ENCODE measurements at regions of chr10 and their contacts with region 1.

Region 1: DNA sequence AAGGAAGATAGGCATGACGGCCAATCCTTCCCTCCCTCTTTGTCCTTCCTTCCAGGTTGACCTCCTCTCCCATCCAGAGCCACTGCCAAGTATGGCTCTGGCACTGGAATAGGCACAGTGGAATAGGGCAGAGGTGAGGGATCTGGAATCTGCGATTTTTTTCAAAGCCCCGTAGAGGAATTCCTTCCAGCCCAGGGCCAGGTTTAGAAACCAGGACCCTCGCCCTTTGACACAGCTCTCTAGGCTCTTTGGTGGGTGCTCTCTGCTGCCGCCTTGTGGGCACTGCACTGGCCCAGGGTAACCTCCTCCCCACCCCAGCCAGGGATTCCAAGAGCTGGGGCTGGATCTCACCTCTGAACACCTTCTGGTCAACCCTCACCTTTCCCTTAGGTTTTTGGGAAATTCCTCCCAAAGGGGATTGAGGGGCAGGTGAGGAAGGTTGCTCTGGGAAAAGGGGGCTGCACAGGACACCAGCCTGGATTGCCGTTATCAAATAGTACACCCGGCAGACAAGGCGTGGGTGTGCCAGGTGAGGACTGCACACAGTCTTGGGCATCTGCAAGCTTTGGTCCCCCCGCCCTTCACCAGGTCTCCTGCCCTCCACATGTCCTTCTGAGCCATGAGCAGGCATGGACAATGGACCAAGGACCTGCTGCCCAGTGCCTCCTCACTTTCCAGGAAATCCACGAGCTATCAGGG is 22.8 kb downstream of the C10orf105 start:
- DNase-seq: peak; percentile 88
- H3K4me3 ChIP-seq: no peak overlapping the region; a peak in 1 of 4 replicates
- H3K27ac ChIP-seq: no peak overlapping the region
- H3K4me1 ChIP-seq: peaks cover 0 to 7% of the 10 kb centered on the region in 2 experiments; a peak in 1 of 4 replicates
- H3K27me3 ChIP-seq: peaks cover 28% of the 10 kb centered on the region; the same call in 1 of the 2 replicates
- CTCF ChIP-seq: peak; percentile 82
- EP300 ChIP-seq: no peak
- RAD21 ChIP-seq: peak; percentile 64

Region 2: DNA sequence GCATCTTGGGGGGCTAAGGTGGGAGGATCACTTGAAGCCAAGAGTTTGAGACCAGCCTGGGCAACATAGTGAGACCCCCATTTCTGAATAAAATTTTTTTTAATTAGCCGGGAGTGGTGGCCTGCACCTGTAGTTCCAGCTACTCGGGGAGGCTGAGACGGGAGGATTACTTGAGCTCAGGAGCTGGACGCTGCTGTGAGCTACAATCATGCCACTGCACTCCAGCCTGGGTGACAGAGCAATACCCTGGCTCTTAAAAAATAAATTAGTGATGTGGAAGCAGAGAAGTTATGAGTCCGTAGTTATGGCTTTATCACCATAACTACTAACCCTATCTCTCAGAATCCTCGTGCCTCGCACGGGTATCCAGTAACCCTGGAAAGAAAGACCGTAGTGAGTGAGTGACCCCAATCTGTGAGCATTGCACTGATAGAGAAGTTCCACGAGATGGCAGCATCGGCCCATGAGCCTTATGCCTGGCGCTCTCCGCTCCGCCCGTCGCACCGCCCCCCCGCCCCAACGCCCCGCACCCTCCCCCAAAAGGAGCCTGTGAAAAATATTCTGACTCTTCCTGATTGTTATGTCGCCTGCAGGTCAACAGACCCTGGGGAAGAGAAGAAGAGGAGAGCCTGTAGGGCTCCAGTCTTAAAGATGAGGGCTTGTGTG is 382.6 kb before region 1 on chr10:
- CTCF ChIA-PET with region 1: interaction called, 33 read pairs
- POLR2A ChIA-PET with region 1: interaction called, 3 read pairs
- DNase-seq: peak; percentile 81
- H3K4me3 ChIP-seq: no peak overlapping the region
- H3K27ac ChIP-seq: no peak overlapping the region
- H3K4me1 ChIP-seq: peaks cover 0 to 11% of the 10 kb centered on the region in 2 experiments; a peak in 1 of 4 replicates
- H3K27me3 ChIP-seq: no peaks in the 10 kb centered on the region
- CTCF ChIP-seq: peak; percentile 69
- EP300 ChIP-seq: no peak
- RAD21 ChIP-seq: peak; percentile 80

Region 3: GRCh38 chr10:71383972-71384687 is 312.6 kb before region 1 on chr10:
- CTCF ChIA-PET with region 1: interaction called, 17 read pairs
- POLR2A ChIA-PET with region 1: no interaction called
- DNase-seq: peak; percentile 84
- H3K4me3 ChIP-seq: no peak overlapping the region; a peak in 1 of 4 replicates
- H3K27ac ChIP-seq: no peak overlapping the region
- H3K4me1 ChIP-seq: no peaks in the 10 kb centered on the region
- H3K27me3 ChIP-seq: peaks cover 30% of the 10 kb centered on the region; the same call in 1 of the 2 replicates
- CTCF ChIP-seq: peak; percentile 89
- EP300 ChIP-seq: no peak
- RAD21 ChIP-seq: peak; percentile 80

Region 4: DNA sequence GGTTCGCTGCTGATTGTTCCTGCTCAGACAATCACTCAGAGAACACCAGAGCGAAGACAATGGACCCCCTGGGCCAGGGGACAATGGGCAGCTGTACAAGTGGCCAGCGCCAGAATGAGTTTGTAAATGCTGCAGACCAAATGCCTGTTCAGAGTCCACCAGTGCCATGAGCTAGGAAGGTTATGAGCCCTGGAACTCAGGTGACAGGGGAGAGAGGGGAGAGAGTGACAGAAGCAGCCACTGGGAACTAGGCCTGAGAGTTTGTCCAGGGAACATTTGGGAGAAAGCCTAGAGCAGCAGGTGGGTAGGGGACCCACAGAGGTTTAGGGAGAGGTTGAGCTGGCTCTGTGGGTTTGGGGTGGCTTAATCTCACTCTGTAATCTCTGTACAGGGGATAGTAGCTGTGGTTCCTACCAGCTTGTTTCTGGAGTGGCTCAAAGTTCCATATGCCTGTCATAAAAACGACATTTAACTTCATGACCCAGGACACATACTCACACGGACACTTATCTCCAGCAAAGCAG is 37.6 kb before region 1 on chr10:
- CTCF ChIA-PET with region 1: interaction called, 19 read pairs
- POLR2A ChIA-PET with region 1: no interaction called
- DNase-seq: peak; percentile 61
- H3K4me3 ChIP-seq: no peak overlapping the region
- H3K27ac ChIP-seq: peak overlapping the region in 1 of 2 experiments; percentile 22; a peak in 1 of 4 replicates
- H3K4me1 ChIP-seq: peaks cover 0 to 18% of the 10 kb centered on the region in 2 experiments; a peak in 1 of 4 replicates
- H3K27me3 ChIP-seq: peaks cover 12% of the 10 kb centered on the region; the same call in 1 of the 2 replicates
- CTCF ChIP-seq: no peak
- EP300 ChIP-seq: peak in 1 of 2 experiments; percentile 64; a peak in 1 of 4 replicates
- RAD21 ChIP-seq: no peak

Region 5: GRCh38 chr10:71684356-71685173 is 12.2 kb before region 1 on chr10:
- CTCF ChIA-PET with region 1: interaction called, 52 read pairs
- POLR2A ChIA-PET with region 1: no interaction called
- DNase-seq: no peak
- H3K4me3 ChIP-seq: no peak overlapping the region
- H3K27ac ChIP-seq: no peak overlapping the region
- H3K4me1 ChIP-seq: no peaks in the 10 kb centered on the region
- H3K27me3 ChIP-seq: peaks cover 15% of the 10 kb centered on the region
- CTCF ChIP-seq: no peak
- EP300 ChIP-seq: no peak
- RAD21 ChIP-seq: no peak

Region 6: GRCh38 chr10:71819286-71819878 is 122.6 kb after region 1 on chr10:
- CTCF ChIA-PET with region 1: no interaction called
- POLR2A ChIA-PET with region 1: no interaction called
- DNase-seq: no peak
- H3K4me3 ChIP-seq: no peak overlapping the region
- H3K27ac ChIP-seq: no peak overlapping the region
- H3K4me1 ChIP-seq: no peaks in the 10 kb centered on the region; a peak in 1 of 4 replicates
- H3K27me3 ChIP-seq: no peaks in the 10 kb centered on the region
- CTCF ChIP-seq: no peak
- EP300 ChIP-seq: no peak
- RAD21 ChIP-seq: no peak

Region 7: DNA sequence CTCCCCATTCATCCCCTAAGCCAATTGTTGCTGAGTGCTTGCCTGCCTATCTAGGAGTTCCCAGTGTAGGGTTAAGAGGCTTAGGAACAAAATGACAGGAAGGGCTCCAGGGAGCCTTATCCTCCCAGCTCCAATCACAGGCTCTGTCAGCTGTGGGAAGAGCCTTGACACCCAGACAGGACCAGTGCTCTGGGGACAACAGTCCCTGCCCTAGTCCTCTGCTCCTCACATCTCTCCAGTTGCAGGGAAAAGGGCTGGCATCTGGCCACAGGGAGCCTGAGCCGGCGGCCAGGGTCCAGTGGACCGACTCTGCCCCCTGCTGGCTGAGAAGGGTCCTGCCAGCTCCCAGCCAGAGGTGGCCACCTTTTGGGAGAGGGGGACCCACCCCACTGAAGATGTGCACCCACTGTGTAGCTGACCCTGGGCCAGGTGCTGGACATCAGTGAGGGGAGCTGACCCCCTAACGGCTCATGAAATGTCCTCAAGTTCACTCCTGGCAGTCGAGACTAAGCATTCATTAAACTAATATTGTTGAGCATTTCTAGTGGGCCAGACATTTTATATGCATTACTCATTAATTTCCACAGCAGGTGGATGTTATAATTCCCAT is 640.3 kb after region 1 on chr10:
- CTCF ChIA-PET with region 1: no interaction called
- POLR2A ChIA-PET with region 1: no interaction called
- DNase-seq: peak; percentile 84
- H3K4me3 ChIP-seq: no peak overlapping the region; a peak in 1 of 4 replicates
- H3K27ac ChIP-seq: peak overlapping the region in 1 of 2 experiments; percentile 99; a peak in 2 of 4 replicates
- H3K4me1 ChIP-seq: peaks cover 3 to 51% of the 10 kb centered on the region in 2 experiments
- H3K27me3 ChIP-seq: no peaks in the 10 kb centered on the region
- CTCF ChIP-seq: peak; percentile 93
- EP300 ChIP-seq: no peak
- RAD21 ChIP-seq: peak; percentile 93